CD4-positive, alpha-beta memory T cell (primary cell): ENCODE measurements at regions of chr10 and their contacts with region 1.

Region 1: GRCh38 chr10:6088721-6089390 is at the start of gene RBM17:
- DNase-seq: peak; percentile 95 to 100 (median 98)
- H3K4me3 ChIP-seq: peak within 1 kb of the TSS; percentile 68 to 94
- H3K4me3 Mint-ChIP-seq: peak within 1 kb of the TSS; percentile 85 to 99 (median 91)
- H3K27ac ChIP-seq: peak within 1 kb of the TSS; percentile 80
- H3K27ac Mint-ChIP-seq: peak within 1 kb of the TSS; percentile 75 to 96 (median 91)
- H3K4me1 ChIP-seq: peaks cover 57% of the 10 kb centered on the region
- H3K4me1 Mint-ChIP-seq: peaks cover 38 to 70% (median 53%) of the 10 kb centered on the region in 4 donors
- H3K27me3 ChIP-seq: no peaks in the 10 kb centered on the region
- H3K27me3 Mint-ChIP-seq: no peaks in the 10 kb centered on the region
- total RNA-seq, gene RBM17: 117 to 125 TPM

Region 2: DNA sequence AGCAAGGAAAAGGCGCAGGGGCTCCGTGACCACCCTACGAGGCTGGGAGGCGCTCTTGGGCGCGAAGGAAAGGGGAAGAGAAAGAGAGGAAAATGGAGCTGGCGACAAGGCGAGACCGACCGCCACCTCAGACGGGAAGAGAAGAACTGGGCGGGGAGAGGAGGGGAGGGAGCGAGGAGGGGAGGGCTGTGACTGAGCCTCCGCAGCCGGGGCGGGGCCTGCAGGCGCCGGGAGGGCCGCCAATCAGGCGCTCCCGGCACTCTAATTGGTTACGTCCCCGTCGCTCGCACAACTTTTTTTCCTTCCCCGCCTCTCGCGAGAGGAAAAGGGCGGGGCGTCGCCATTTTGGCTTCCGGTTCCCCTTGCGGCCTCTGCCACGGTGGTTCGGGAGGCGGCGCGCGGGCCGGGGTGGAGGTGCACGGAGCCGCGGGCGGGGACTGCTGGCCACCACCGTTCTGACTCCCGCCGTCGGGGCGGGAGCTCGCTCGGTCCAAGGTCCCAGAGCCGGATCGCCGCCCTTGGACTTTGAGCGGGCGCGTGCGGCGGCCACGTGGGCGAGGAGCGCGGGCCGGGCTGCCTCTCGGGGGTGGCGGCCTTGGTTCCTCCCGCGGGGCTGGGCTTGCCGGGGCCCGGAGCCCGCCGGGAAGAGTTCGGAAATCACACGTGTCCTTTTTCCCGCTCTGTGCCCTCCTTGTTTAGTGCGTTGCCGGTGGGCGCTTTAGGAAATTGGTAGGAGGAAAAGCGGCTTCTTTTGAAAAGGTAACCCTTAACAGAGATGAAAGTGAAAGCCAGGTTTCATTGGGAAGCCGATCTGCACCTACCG is 275.4 kb before region 1 on chr10 and contains the start of gene GDI2:
- CTCF ChIA-PET with region 1: no interaction called
- POLR2A ChIA-PET with region 1: no interaction called
- intact Hi-C with region 1: loop called (anchors 10 kb)
- DNase-seq: peak; percentile 96 to 98 (median 97)
- H3K4me3 ChIP-seq: peak within 1 kb of the TSS; percentile 78 to 95
- H3K4me3 Mint-ChIP-seq: peak within 1 kb of the TSS; percentile 87 to 99 (median 95)
- H3K27ac ChIP-seq: peak within 1 kb of the TSS; percentile 98
- H3K27ac Mint-ChIP-seq: peak within 1 kb of the TSS; percentile 88 to 98 (median 97)
- H3K4me1 ChIP-seq: peaks cover 51% of the 10 kb centered on the region
- H3K4me1 Mint-ChIP-seq: peaks cover 40 to 65% (median 53%) of the 10 kb centered on the region in 4 donors
- H3K27me3 ChIP-seq: no peaks in the 10 kb centered on the region
- H3K27me3 Mint-ChIP-seq: no peaks in the 10 kb centered on the region
- total RNA-seq, gene GDI2: 137 to 140 TPM

Region 3: GRCh38 chr10:6014241-6014761 is 74.6 kb before region 1 on chr10:
- CTCF ChIA-PET with region 1: interaction called, 127 read pairs
- POLR2A ChIA-PET with region 1: interaction called, 16 read pairs
- intact Hi-C with region 1: loop called (anchors 1 kb)
- DNase-seq: peak; percentile 76 to 92 (median 83)
- H3K4me3 ChIP-seq: no peak overlapping the region
- H3K4me3 Mint-ChIP-seq: peak overlapping the region in 6 of 8 donors; percentile 26 to 82 (median 40)
- H3K27ac ChIP-seq: peak overlapping the region; percentile 70
- H3K27ac Mint-ChIP-seq: peak overlapping the region; percentile 92 to 99 (median 97)
- H3K4me1 ChIP-seq: peaks cover 23% of the 10 kb centered on the region
- H3K4me1 Mint-ChIP-seq: peaks cover 16 to 41% (median 20%) of the 10 kb centered on the region in 4 donors
- H3K27me3 ChIP-seq: no peaks in the 10 kb centered on the region
- H3K27me3 Mint-ChIP-seq: no peaks in the 10 kb centered on the region

Region 4: GRCh38 chr10:6050801-6051445 is 37.9 kb before region 1 on chr10:
- CTCF ChIA-PET with region 1: interaction called, 84 read pairs
- POLR2A ChIA-PET with region 1: interaction called, 74 read pairs
- intact Hi-C with region 1: loop called (anchors 1 kb)
- DNase-seq: peak; percentile 91 to 99 (median 94)
- H3K4me3 ChIP-seq: peak overlapping the region; percentile 49 to 76
- H3K4me3 Mint-ChIP-seq: peak overlapping the region; percentile 91 to 97 (median 94)
- H3K27ac ChIP-seq: peak overlapping the region; percentile 88
- H3K27ac Mint-ChIP-seq: peak overlapping the region; percentile 96 to 99 (median 98)
- H3K4me1 ChIP-seq: peaks cover 85% of the 10 kb centered on the region
- H3K4me1 Mint-ChIP-seq: peaks cover 61 to 92% (median 84%) of the 10 kb centered on the region in 4 donors
- H3K27me3 ChIP-seq: no peaks in the 10 kb centered on the region
- H3K27me3 Mint-ChIP-seq: no peaks in the 10 kb centered on the region

Region 5: DNA sequence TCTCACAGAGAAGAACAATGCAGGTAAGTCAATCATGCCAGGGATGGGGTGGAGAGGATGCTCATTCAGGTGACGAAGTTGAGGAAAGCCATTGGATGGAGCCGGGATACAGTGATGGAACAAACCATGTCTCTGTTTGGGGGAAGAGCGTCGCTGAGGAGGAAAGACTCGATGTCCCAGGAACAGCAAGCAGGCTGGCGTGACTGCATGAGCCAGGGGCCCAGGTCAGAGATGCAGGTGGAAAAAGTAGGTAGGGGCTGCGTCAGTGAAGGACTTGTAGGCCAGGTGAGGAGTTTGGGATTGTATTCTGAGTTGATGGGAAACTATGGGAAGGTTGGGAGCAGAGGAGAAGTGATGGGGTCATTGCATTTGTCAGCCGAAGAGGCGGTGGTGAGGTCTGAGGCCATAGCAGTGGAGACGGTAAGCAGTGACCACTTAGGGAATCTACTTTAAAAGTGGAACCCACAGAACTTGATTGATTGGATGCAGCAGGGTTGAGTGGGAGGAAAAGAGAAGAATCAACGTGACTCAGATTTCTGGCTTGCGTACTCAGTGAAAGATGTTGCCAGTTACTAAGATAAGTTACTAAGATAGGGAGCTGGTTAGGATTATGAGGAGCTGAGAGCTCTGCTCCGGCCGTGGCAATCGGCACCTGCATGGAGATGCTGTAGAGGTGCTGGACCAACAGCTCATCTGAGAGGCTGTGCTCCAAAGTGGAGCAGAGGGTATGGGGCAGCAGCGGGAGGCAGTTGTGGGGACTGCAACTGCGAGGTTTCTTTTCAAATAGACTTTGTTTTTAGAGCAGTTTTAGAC is 14.2 kb before region 1 on chr10:
- CTCF ChIA-PET with region 1: interaction called, 53 read pairs
- POLR2A ChIA-PET with region 1: interaction called, 23 read pairs
- intact Hi-C with region 1: no loop called
- DNase-seq: no peak
- H3K4me3 ChIP-seq: no peak overlapping the region
- H3K4me3 Mint-ChIP-seq: peak overlapping the region in 3 of 8 donors; percentile 17 to 77 (median 41)
- H3K27ac ChIP-seq: no peak overlapping the region
- H3K27ac Mint-ChIP-seq: peak overlapping the region in 4 of 7 donors; percentile 34 to 87 (median 75)
- H3K4me1 ChIP-seq: peaks cover 33% of the 10 kb centered on the region
- H3K4me1 Mint-ChIP-seq: peaks cover 32 to 56% (median 34%) of the 10 kb centered on the region in 4 donors
- H3K27me3 ChIP-seq: no peaks in the 10 kb centered on the region
- H3K27me3 Mint-ChIP-seq: no peaks in the 10 kb centered on the region

Region 6: DNA sequence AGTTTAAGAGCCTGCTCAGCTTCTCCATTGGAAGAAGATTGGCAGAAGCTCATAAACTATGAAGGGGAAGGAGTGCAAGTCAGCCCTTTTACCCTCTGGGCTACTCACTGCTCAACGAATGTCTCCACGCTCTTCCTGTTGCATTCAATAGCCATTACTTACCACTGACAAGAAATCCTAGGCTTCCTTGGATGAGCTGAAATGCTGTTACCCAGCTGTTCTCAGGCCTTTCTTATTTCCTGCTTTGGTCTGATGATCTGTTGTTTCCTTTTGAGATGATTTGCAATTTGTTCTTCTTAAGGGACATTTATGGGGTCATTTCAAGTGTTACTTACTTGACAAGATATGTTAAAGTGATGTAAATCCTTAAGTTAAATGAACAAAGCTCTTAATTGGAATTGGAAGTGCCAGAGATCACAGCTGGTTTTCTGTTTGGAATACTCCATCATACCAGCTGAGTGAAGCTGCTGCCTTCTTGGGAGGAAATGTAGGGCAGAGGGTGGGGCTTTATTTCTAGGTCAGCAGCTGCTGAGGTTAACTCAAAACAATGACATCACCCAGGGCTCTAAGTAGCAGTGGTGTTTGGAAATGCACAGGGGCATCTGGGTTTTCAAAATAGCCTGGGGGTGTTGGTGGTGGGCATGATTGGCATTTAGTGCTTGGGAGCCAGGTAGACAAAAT is 321.3 kb after region 1 on chr10:
- CTCF ChIA-PET with region 1: interaction called, 11 read pairs
- POLR2A ChIA-PET with region 1: interaction called, 9 read pairs
- intact Hi-C with region 1: no loop called
- DNase-seq: peak; percentile 71 to 84 (median 79)
- H3K4me3 ChIP-seq: peak overlapping the region; percentile 11 to 34
- H3K4me3 Mint-ChIP-seq: peak overlapping the region; percentile 76 to 93 (median 81)
- H3K27ac ChIP-seq: peak overlapping the region; percentile 78
- H3K27ac Mint-ChIP-seq: peak overlapping the region; percentile 93 to 99 (median 98)
- H3K4me1 ChIP-seq: peaks cover 50% of the 10 kb centered on the region
- H3K4me1 Mint-ChIP-seq: peaks cover 31 to 66% (median 44%) of the 10 kb centered on the region in 4 donors
- H3K27me3 ChIP-seq: no peaks in the 10 kb centered on the region
- H3K27me3 Mint-ChIP-seq: no peaks in the 10 kb centered on the region